ENCODE measurements at regions of chr20 and their contacts with region 1.

Region 1: GRCh38 chr20:1466211-1467081 is at the start of gene NSFL1C:
- DNase-seq: peak; percentile 91 to 92
- ATAC-seq: peak; percentile 92 to 93
- H3K4me3 ChIP-seq: peak within 1 kb of the TSS; percentile 84 to 98 (median 96)
- H3K27ac ChIP-seq: peak within 1 kb of the TSS; percentile 92 to 98 (median 95)
- H3K4me1 ChIP-seq: peaks cover 25 to 39% of the 10 kb centered on the region in 2 donors
- H3K27me3 ChIP-seq: no peaks in the 10 kb centered on the region
- CTCF ChIP-seq: peak; percentile 85 to 100 (median 99)
- POLR2A ChIP-seq: peak; percentile 75 to 93
- total RNA-seq, gene NSFL1C: 68.0 to 91.4 (median 80.6) TPM

Region 2: DNA sequence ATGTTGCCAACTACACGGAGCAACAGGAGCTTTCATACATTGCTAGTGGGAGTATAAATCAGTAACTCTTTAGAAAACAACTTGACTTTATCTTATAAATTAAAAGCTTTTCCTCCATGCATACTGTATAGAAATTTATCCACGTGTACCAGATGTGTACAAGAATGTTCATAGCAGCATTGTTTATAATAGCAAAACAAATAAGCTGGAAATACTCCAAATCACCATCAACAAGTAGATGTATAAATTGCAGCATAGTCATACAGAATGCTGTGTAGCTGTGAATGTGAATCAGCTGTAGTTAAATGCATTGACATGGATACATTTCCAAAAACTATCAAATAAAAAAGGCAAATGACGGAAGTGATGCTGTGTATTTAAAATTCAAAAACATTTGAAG is 342.0 kb before region 1 on chr20:
- in situ Hi-C with region 1: loop called (anchors 25 kb)
- intact Hi-C with region 1: loop called (anchors 2 kb)
- DNase-seq: no peak
- ATAC-seq: no peak
- H3K4me3 ChIP-seq: no peak overlapping the region
- H3K27ac ChIP-seq: peak overlapping the region in 3 of 4 donors; percentile 89 to 96 (median 92)
- H3K4me1 ChIP-seq: peaks cover 54 to 58% of the 10 kb centered on the region in 2 donors
- H3K27me3 ChIP-seq: no peaks in the 10 kb centered on the region
- CTCF ChIP-seq: no peak
- POLR2A ChIP-seq: no peak

Region 3: DNA sequence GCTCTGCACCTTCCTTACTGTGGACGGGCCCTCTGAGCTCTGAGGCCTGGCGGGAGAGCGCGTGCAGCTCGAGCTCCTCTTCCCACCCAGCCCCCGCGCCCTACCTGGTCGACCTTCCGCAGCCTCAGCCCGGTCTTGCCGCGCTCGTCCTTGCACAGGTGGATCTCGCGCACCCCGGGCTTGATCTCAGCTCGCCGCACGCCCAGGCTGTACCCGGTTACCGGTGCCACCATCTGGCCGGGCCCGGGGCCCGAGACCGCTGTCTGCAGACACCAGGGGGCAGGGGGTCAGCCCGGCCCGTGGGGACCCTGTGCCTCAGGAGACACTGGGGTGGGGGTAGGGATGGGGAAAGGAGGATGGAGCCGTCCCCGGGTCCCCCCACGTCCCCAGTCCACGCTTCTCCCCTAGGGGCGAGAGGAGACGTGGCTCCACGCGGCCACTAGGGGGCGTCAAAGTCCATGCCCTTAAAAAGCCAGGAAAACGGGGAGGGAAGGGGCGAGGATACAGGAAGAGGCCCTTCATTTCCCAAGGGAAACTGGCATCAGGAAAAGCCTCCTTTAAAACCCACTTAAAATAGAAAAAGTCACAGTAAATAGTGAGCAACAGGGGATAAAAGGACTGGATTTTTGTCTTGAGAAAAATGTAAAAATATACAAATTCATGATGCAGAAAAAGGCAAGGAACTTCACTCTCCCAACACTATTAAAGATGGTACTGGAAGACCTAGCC is 153.0 kb before region 1 on chr20:
- in situ Hi-C with region 1: no loop called
- intact Hi-C with region 1: loop called (anchors 1 kb)
- DNase-seq: peak; percentile 52 to 61
- ATAC-seq: peak; percentile 85 to 93
- H3K4me3 ChIP-seq: peak overlapping the region in 3 of 4 donors; percentile 23 to 37 (median 32)
- H3K27ac ChIP-seq: no peak overlapping the region
- H3K4me1 ChIP-seq: peaks cover 0 to 10% of the 10 kb centered on the region in 2 donors
- H3K27me3 ChIP-seq: no peaks in the 10 kb centered on the region
- CTCF ChIP-seq: peak; percentile 94 to 99 (median 97)
- POLR2A ChIP-seq: no peak

Region 4: GRCh38 chr20:1392823-1393506 is 73.5 kb before region 1 on chr20 and contains the start of gene FKBP1A:
- in situ Hi-C with region 1: no loop called
- intact Hi-C with region 1: loop called (anchors 1 kb)
- DNase-seq: peak; percentile 73 to 92
- ATAC-seq: peak; percentile 89 to 92
- H3K4me3 ChIP-seq: peak within 1 kb of the TSS; percentile 76 to 96 (median 91)
- H3K27ac ChIP-seq: peak within 1 kb of the TSS; percentile 83 to 90 (median 87)
- H3K4me1 ChIP-seq: peaks cover 47 to 49% of the 10 kb centered on the region in 2 donors
- H3K27me3 ChIP-seq: peaks cover 0 to 3% (median 3%) of the 10 kb centered on the region in 3 donors
- CTCF ChIP-seq: peak in 3 of 5 experiments; percentile 4 to 39 (median 29)
- POLR2A ChIP-seq: peak; percentile 85 to 88
- total RNA-seq, gene FKBP1A: 27.7 to 89.4 (median 52.5) TPM

Measured in gastrocnemius medialis (tissue), 4 donors.